ENCODE measurements at regions of chr4 and their contacts with region 1.

Region 1: DNA sequence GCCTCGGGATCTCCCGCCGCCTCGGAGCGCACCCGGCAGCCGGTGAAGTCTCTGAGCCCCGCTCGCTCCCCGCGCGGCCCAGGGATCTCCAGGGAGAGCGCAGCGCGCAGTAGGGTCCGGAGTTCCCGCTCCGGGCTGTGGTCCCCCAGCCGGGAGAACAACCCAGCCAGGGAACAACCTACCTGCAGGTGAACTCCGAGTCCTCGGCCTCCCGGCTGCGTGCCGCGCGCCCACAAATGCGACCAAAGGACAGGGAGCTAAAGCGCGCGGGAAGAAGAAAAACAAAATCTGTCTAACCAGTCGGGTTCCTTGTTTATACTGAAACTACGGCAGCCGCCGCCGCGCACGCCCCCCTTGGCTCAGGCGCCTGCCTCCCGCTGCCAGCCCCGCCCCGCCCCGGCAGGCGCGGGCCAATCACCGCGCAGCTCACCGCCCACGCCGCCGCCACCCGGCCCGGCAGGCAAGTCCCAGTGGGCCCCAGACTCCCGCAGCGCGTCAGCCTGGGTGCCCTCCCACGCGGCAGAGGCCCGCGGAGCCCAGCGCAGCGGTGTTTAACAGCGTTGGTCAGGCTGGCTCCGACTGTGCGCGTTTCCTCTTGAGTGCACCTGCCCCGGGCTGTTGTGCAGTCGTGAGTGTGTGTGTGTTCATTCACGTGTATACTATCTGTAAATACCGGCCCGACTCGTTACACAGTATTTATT is at the start of gene RASGEF1B:
- DNase-seq: peak; percentile 98
- ATAC-seq: peak; percentile 79
- H3K4me3 ChIP-seq: peak within 1 kb of the TSS; percentile 85 to 99 (median 98)
- H3K4me3 Mint-ChIP-seq: peak within 1 kb of the TSS; percentile 98
- H3K27ac ChIP-seq: peak within 1 kb of the TSS; percentile 98 to 100
- H3K27ac Mint-ChIP-seq: peak within 1 kb of the TSS; percentile 97
- H3K4me1 ChIP-seq: peaks cover 38 to 46% of the 10 kb centered on the region in 2 donors
- H3K4me1 Mint-ChIP-seq: peaks cover 49% of the 10 kb centered on the region
- H3K27me3 ChIP-seq: no peaks in the 10 kb centered on the region
- H3K27me3 Mint-ChIP-seq: no peaks in the 10 kb centered on the region
- CTCF ChIP-seq: no peak
- total RNA-seq, gene RASGEF1B: 130 and 141 TPM in 2 replicates

Region 2: GRCh38 chr4:81405894-81406401 is 65.8 kb before region 1 on chr4:
- CTCF ChIA-PET with region 1: interaction called, 10 read pairs
- POLR2A ChIA-PET with region 1: interaction called, 5 read pairs
- intact Hi-C with region 1: loop called (anchors 1 kb)
- DNase-seq: peak; percentile 85
- ATAC-seq: peak; percentile 85
- H3K4me3 ChIP-seq: peak overlapping the region in 1 of 5 experiments; percentile 12
- H3K4me3 Mint-ChIP-seq: no peak overlapping the region
- H3K27ac ChIP-seq: no peak overlapping the region
- H3K27ac Mint-ChIP-seq: no peak overlapping the region
- H3K4me1 ChIP-seq: no peaks in the 10 kb centered on the region
- H3K4me1 Mint-ChIP-seq: peaks cover 3% of the 10 kb centered on the region
- H3K27me3 ChIP-seq: no peaks in the 10 kb centered on the region
- H3K27me3 Mint-ChIP-seq: no peaks in the 10 kb centered on the region
- CTCF ChIP-seq: peak; percentile 99

Region 3: DNA sequence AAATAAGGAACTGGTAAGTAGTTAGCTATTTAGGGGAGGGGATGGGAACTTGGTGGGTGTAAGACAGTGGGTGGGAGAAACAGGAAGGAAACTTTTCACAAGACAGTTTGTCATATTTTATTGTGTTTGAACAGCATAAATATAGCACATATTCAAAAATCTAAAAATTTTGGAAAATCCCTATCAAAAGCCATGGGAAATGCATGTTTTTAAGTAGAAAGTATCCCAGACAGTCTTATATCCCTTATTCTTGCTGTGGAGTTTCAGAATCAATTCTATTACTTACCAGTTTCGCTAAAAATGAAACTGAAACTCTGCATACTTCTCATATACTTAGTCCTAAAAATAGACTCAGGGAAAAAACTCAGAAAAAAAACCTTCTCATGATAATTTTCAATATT is 22.3 kb after region 1 on chr4:
- CTCF ChIA-PET with region 1: interaction called, 16 read pairs
- POLR2A ChIA-PET with region 1: interaction called, 7 read pairs
- intact Hi-C with region 1: loop called (anchors 1 kb)
- DNase-seq: peak; percentile 76
- ATAC-seq: peak; percentile 37
- H3K4me3 ChIP-seq: peak overlapping the region in 2 of 5 experiments; percentile 1 to 50
- H3K4me3 Mint-ChIP-seq: peak overlapping the region; percentile 76
- H3K27ac ChIP-seq: peak overlapping the region; percentile 59 to 80
- H3K27ac Mint-ChIP-seq: peak overlapping the region; percentile 85
- H3K4me1 ChIP-seq: peaks cover 43 to 54% of the 10 kb centered on the region in 2 donors
- H3K4me1 Mint-ChIP-seq: peaks cover 49% of the 10 kb centered on the region
- H3K27me3 ChIP-seq: no peaks in the 10 kb centered on the region
- H3K27me3 Mint-ChIP-seq: no peaks in the 10 kb centered on the region
- CTCF ChIP-seq: no peak

Region 4: GRCh38 chr4:81635739-81636138 is 164.0 kb after region 1 on chr4:
- CTCF ChIA-PET with region 1: interaction called, 4 read pairs
- POLR2A ChIA-PET with region 1: interaction called, 3 read pairs
- intact Hi-C with region 1: loop called (anchors 2 kb)
- DNase-seq: peak; percentile 87
- ATAC-seq: peak; percentile 76
- H3K4me3 ChIP-seq: peak overlapping the region in 2 of 5 experiments; percentile 4 to 13
- H3K4me3 Mint-ChIP-seq: peak overlapping the region; percentile 83
- H3K27ac ChIP-seq: peak overlapping the region; percentile 17 to 51
- H3K27ac Mint-ChIP-seq: peak overlapping the region; percentile 91
- H3K4me1 ChIP-seq: peaks cover 33 to 34% of the 10 kb centered on the region in 2 donors
- H3K4me1 Mint-ChIP-seq: peaks cover 55% of the 10 kb centered on the region
- H3K27me3 ChIP-seq: no peaks in the 10 kb centered on the region
- H3K27me3 Mint-ChIP-seq: no peaks in the 10 kb centered on the region
- CTCF ChIP-seq: no peak

Region 5: GRCh38 chr4:81808011-81808672 is 336.4 kb after region 1 on chr4:
- CTCF ChIA-PET with region 1: interaction called, 25 read pairs
- POLR2A ChIA-PET with region 1: no interaction called
- intact Hi-C with region 1: no loop called
- DNase-seq: no peak
- ATAC-seq: no peak
- H3K4me3 ChIP-seq: no peak overlapping the region
- H3K4me3 Mint-ChIP-seq: no peak overlapping the region
- H3K27ac ChIP-seq: no peak overlapping the region
- H3K27ac Mint-ChIP-seq: no peak overlapping the region
- H3K4me1 ChIP-seq: no peaks in the 10 kb centered on the region
- H3K4me1 Mint-ChIP-seq: peaks cover 3% of the 10 kb centered on the region
- H3K27me3 ChIP-seq: no peaks in the 10 kb centered on the region
- H3K27me3 Mint-ChIP-seq: peaks cover 4% of the 10 kb centered on the region
- CTCF ChIP-seq: no peak

Region 6: GRCh38 chr4:81919238-81919637 is 447.5 kb after region 1 on chr4:
- CTCF ChIA-PET with region 1: interaction called, 24 read pairs
- POLR2A ChIA-PET with region 1: no interaction called
- intact Hi-C with region 1: loop called (anchors 1 kb)
- DNase-seq: peak; percentile 34
- ATAC-seq: peak; percentile 72
- H3K4me3 ChIP-seq: no peak overlapping the region
- H3K4me3 Mint-ChIP-seq: no peak overlapping the region
- H3K27ac ChIP-seq: no peak overlapping the region
- H3K27ac Mint-ChIP-seq: no peak overlapping the region
- H3K4me1 ChIP-seq: peaks cover 3% of the 10 kb centered on the region in 2 donors
- H3K4me1 Mint-ChIP-seq: no peaks in the 10 kb centered on the region
- H3K27me3 ChIP-seq: peaks cover 0 to 3% (median under 1%) of the 10 kb centered on the region in 4 experiments
- H3K27me3 Mint-ChIP-seq: peaks cover 21% of the 10 kb centered on the region
- CTCF ChIP-seq: peak; percentile 63